Activated naive CD4-positive, alpha-beta T cell treated with anti-CD3 and anti-CD28 coated beads for 36 hours (primary cell): ENCODE measurements at regions of chr15 and their contacts with region 1.

Region 1: DNA sequence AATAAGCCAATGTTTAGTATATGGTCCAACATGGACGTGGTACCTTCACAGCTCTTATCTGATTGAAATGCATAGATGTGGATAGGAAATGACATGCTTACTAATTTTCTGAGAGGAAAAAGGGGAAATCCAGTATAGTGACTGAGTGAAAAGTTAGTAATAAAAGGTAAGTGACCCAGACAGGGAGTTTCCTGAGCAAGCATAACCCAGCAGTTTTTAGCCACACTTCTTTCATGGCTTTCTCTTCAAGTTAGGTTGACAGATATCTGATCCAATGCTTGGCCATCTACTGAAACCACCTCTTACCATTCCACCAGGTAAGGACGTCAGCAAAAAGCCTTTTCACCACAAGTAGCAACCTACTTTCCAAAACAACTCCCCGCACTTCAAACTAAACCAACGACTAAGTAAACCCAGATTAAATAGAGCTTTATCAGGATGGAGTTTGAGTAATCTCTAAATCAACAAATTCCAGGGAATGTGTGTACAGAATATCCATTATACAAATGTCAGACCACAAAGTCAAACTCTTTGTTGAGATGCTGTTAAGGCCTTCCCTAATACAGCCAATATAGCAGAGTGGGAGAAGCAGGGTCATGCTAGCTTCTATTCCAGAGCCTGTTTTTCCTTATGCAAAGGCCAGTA is 329.7 kb downstream of the RORA start:
- DNase-seq: peak; percentile 60
- H3K4me3 Mint-ChIP-seq: no peak overlapping the region
- H3K27ac Mint-ChIP-seq: peak overlapping the region; percentile 74
- H3K4me1 Mint-ChIP-seq: peaks cover 63% of the 10 kb centered on the region
- H3K27me3 Mint-ChIP-seq: no peaks in the 10 kb centered on the region

Region 2: GRCh38 chr15:60695713-60696522 is 203.5 kb before region 1 on chr15:
- CTCF ChIA-PET with region 1: interaction called, 3 read pairs
- intact Hi-C with region 1: loop called (anchors 1 kb)
- DNase-seq: peak; percentile 94
- H3K4me3 Mint-ChIP-seq: peak overlapping the region; percentile 20
- H3K27ac Mint-ChIP-seq: peak overlapping the region; percentile 88
- H3K4me1 Mint-ChIP-seq: peaks cover 80% of the 10 kb centered on the region
- H3K27me3 Mint-ChIP-seq: no peaks in the 10 kb centered on the region

Region 3: GRCh38 chr15:60760646-60761504 is 138.6 kb before region 1 on chr15:
- CTCF ChIA-PET with region 1: no interaction called
- intact Hi-C with region 1: loop called (anchors 1 kb)
- DNase-seq: peak; percentile 46
- H3K4me3 Mint-ChIP-seq: no peak overlapping the region
- H3K27ac Mint-ChIP-seq: peak overlapping the region; percentile 25
- H3K4me1 Mint-ChIP-seq: peaks cover 33% of the 10 kb centered on the region
- H3K27me3 Mint-ChIP-seq: no peaks in the 10 kb centered on the region

Region 4: GRCh38 chr15:60798821-60799220 is 100.6 kb before region 1 on chr15:
- CTCF ChIA-PET with region 1: interaction called, 6 read pairs
- intact Hi-C with region 1: loop called (anchors 1 kb)
- DNase-seq: peak; percentile 87
- H3K4me3 Mint-ChIP-seq: peak overlapping the region; percentile 34
- H3K27ac Mint-ChIP-seq: peak overlapping the region; percentile 98
- H3K4me1 Mint-ChIP-seq: peaks cover 83% of the 10 kb centered on the region
- H3K27me3 Mint-ChIP-seq: no peaks in the 10 kb centered on the region

Region 5: GRCh38 chr15:60840306-60840702 is 59.1 kb before region 1 on chr15:
- CTCF ChIA-PET with region 1: interaction called, 3 read pairs
- intact Hi-C with region 1: loop called (anchors 1 kb)
- DNase-seq: peak; percentile 53
- H3K4me3 Mint-ChIP-seq: peak overlapping the region; percentile 76
- H3K27ac Mint-ChIP-seq: peak overlapping the region; percentile 84
- H3K4me1 Mint-ChIP-seq: peaks cover 73% of the 10 kb centered on the region
- H3K27me3 Mint-ChIP-seq: no peaks in the 10 kb centered on the region

Region 6: DNA sequence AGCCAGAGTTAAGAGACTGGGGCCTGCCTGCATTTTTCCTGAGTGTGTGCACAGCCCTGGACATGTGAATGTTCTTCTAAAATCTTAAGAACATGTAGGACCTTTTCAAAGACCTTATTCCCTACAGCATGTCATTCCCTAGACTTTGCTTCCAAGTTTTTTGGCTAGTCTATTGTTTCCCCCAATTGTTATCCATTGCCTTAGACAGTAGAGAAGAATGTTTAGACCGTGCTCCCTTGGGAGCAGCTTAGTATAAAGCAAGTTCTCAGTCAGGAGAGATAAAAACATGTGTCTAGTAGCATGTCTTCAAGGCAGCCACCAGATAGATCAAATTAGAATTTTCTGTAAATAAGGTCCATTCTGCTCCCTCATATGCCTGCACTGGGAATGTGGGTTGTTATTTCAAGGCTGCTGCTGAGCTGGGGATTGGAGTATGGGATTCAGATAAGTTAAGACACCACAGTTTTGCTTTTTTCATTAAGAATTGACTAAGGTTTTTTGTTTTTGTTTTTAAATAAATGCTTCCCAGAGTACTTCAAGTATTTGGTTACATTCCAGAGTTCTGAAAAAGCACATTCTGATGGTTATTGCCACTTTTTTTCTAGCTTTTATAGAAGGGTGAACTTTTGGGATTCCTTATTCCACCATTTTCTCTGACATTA is 82.9 kb after region 1 on chr15:
- CTCF ChIA-PET with region 1: no interaction called
- intact Hi-C with region 1: no loop called
- DNase-seq: no peak
- H3K4me3 Mint-ChIP-seq: no peak overlapping the region
- H3K27ac Mint-ChIP-seq: no peak overlapping the region
- H3K4me1 Mint-ChIP-seq: no peaks in the 10 kb centered on the region
- H3K27me3 Mint-ChIP-seq: peaks cover 32% of the 10 kb centered on the region